A549 (cell line): ENCODE measurements at regions of chr2 and their contacts with region 1.

Region 1: GRCh38 chr2:61924895-61925663 is 19.6 kb downstream of the COMMD1 start:
- DNase-seq: no peak
- ATAC-seq: 0 out of 6 replicates have a peak, but pooled peaks have one; percentile 24 to 27
- H3K4me3 ChIP-seq: no peak overlapping the region
- H3K27ac ChIP-seq: no peak overlapping the region
- H3K4me1 ChIP-seq: no peaks in the 10 kb centered on the region
- CTCF ChIP-seq: no peak
- EP300 ChIP-seq: no peak
- POLR2A ChIP-seq: no peak
- RAD21 ChIP-seq: no peak

Region 2: DNA sequence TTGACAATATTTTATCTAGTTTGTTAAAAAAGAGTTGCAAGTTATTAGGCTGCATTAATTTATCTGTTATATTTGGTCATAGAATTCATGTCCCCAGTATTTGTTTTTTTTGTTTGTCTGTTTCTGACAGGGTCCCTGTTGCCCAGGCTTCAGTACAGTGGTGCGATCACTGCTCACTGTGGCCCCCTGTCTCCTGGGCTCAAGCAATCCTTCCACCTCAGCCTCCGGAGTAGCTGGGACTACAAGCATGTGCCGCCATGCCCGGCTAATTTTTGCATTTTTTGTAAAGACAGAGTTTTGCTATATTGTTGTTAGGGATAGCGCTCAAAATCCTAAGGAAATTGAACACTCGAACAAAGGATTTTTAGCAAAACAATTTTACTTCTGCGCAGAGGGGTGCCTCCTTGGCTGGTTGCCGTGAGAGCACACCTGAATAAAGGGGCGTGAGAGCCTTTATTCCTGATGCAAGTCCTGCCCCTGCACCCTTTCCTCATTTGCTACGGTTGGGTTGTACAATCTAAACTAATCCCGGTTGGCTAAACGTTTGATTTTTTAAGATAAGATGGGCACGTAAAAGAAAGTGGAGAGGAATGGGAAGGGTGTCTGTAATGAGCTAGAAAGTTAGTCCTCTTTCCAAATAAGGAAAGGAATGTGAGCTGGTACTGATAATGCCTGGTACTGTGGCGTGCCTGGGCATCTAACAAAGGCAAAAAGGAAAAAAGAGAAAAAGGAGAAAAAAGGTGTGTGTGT is 45.9 kb after region 1 on chr2:
- CTCF ChIA-PET with region 1: no interaction called
- POLR2A ChIA-PET with region 1: no interaction called
- DNase-seq: no peak
- ATAC-seq: peak in 1 of 2 experiments; percentile 60; a peak in 1 of 6 replicates
- H3K4me3 ChIP-seq: no peak overlapping the region
- H3K27ac ChIP-seq: no peak overlapping the region
- H3K4me1 ChIP-seq: no peaks in the 10 kb centered on the region
- CTCF ChIP-seq: no peak
- EP300 ChIP-seq: no peak
- POLR2A ChIP-seq: no peak
- RAD21 ChIP-seq: no peak

Region 3: GRCh38 chr2:62112179-62112578 is 187.1 kb after region 1 on chr2:
- CTCF ChIA-PET with region 1: no interaction called
- POLR2A ChIA-PET with region 1: interaction called, 10 read pairs
- DNase-seq: no peak
- ATAC-seq: no peak
- H3K4me3 ChIP-seq: no peak overlapping the region
- H3K27ac ChIP-seq: no peak overlapping the region
- H3K4me1 ChIP-seq: no peaks in the 10 kb centered on the region
- CTCF ChIP-seq: no peak
- EP300 ChIP-seq: no peak
- POLR2A ChIP-seq: no peak
- RAD21 ChIP-seq: no peak